ENCODE measurements at regions of chr7 and their contacts with region 1.

Region 1: DNA sequence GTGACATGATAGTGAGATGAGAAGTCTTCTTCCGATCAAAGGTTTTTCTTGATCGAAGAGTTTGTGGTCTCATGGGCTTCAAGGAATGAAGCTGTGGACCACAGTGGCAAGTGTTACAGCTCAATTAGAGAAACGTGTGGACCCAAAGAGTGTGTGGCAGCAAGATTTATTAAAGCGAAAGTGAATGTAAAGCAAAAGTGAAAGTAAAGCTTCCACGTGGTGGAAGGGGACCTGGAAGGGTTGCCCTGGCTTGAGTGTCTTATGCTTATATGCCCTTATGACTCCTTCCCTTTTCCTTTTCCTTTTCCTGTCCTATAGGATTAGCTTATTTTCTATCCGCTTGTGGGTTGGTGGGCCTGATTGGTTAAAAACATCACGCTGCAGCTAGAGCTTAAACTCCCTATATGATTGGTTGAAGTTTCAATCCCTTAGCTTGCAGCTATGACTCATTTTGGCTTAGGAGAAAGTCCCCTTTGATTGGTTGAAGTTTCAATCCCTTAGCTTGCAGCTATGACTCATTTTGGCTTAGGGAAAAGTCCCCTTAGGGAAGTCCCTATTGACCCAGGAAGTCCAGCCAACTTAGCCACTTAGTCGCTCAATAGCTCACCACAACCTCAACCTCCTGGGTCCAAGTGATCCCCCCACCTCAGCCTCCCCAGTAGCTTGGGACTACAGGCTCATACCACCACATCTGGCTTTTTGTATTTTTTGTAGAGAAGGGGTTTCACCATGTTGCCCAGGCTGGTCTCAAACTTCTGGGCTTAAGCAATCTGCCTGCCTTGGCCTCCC is 34.7 kb downstream of the MRPS24 start:
- DNase-seq: peak; percentile 29 to 80
- ATAC-seq: peak; percentile 67 to 75 (median 70)
- H3K4me3 ChIP-seq: peak overlapping the region; percentile 56
- H3K4me3 Mint-ChIP-seq: peak overlapping the region; percentile 84
- H3K27ac ChIP-seq: peak overlapping the region; percentile 81
- H3K27ac Mint-ChIP-seq: peak overlapping the region; percentile 83 to 91
- H3K4me1 ChIP-seq: peaks cover 18% of the 10 kb centered on the region
- H3K4me1 Mint-ChIP-seq: peaks cover 16 to 19% of the 10 kb centered on the region in 2 donors
- H3K27me3 ChIP-seq: no peaks in the 10 kb centered on the region
- H3K27me3 Mint-ChIP-seq: no peaks in the 10 kb centered on the region
- CTCF ChIP-seq: no peak

Region 2: GRCh38 chr7:42869131-42870020 is 965.3 kb before region 1 on chr7:
- intact Hi-C with region 1: no loop called
- DNase-seq: no peak
- ATAC-seq: peak in 1 of 3 donors; percentile 12
- H3K4me3 ChIP-seq: no peak overlapping the region
- H3K4me3 Mint-ChIP-seq: no peak overlapping the region
- H3K27ac ChIP-seq: no peak overlapping the region
- H3K27ac Mint-ChIP-seq: no peak overlapping the region
- H3K4me1 ChIP-seq: no peaks in the 10 kb centered on the region
- H3K4me1 Mint-ChIP-seq: peaks cover 0 to 15% of the 10 kb centered on the region in 2 donors
- H3K27me3 ChIP-seq: no peaks in the 10 kb centered on the region
- H3K27me3 Mint-ChIP-seq: peaks cover 0 to 6% of the 10 kb centered on the region in 2 donors
- CTCF ChIP-seq: no peak

Region 3: GRCh38 chr7:42940985-42941847 is 893.4 kb before region 1 on chr7:
- intact Hi-C with region 1: loop called (anchors 2 kb)
- DNase-seq: peak; percentile 42 to 80
- ATAC-seq: peak; percentile 58 to 77 (median 74)
- H3K4me3 ChIP-seq: no peak overlapping the region
- H3K4me3 Mint-ChIP-seq: no peak overlapping the region
- H3K27ac ChIP-seq: no peak overlapping the region
- H3K27ac Mint-ChIP-seq: no peak overlapping the region
- H3K4me1 ChIP-seq: no peaks in the 10 kb centered on the region
- H3K4me1 Mint-ChIP-seq: no peaks in the 10 kb centered on the region
- H3K27me3 ChIP-seq: no peaks in the 10 kb centered on the region
- H3K27me3 Mint-ChIP-seq: no peaks in the 10 kb centered on the region
- CTCF ChIP-seq: peak; percentile 85

Region 4: DNA sequence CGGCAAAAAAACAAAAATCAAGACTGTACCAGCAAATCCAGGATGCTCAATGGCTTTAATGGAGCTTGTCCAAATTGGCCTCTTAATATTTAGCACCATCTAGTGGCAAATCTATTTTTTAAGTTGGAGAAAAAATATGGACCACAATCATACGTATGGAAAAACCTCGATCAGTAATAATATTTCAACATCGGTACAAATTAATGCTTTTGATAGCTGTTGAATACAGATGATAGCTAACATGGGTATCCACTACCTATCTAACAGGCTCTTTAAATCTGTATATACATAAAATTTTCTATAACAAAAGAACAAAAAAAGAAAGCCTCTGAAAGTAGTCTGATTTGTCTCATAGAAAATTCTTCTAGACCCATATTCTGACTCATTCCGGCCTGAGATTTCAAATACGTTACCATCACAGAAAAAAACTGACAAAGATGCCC is 134.6 kb before region 1 on chr7:
- intact Hi-C with region 1: loop called (anchors 1 kb)
- DNase-seq: peak in 1 of 2 donors; percentile 80
- ATAC-seq: peak; percentile 70 to 94 (median 84)
- H3K4me3 ChIP-seq: no peak overlapping the region
- H3K4me3 Mint-ChIP-seq: peak overlapping the region; percentile 32
- H3K27ac ChIP-seq: no peak overlapping the region
- H3K27ac Mint-ChIP-seq: peak overlapping the region; percentile 54 to 63
- H3K4me1 ChIP-seq: no peaks in the 10 kb centered on the region
- H3K4me1 Mint-ChIP-seq: peaks cover 29 to 31% of the 10 kb centered on the region in 2 donors
- H3K27me3 ChIP-seq: no peaks in the 10 kb centered on the region
- H3K27me3 Mint-ChIP-seq: no peaks in the 10 kb centered on the region
- CTCF ChIP-seq: peak; percentile 79

Region 5: GRCh38 chr7:43729214-43729923 is 105.3 kb before region 1 on chr7 and contains the start of gene COA1:
- intact Hi-C with region 1: loop called (anchors 2 kb)
- DNase-seq: peak; percentile 74 to 93
- ATAC-seq: peak; percentile 92 to 96 (median 96)
- H3K4me3 ChIP-seq: peak within 1 kb of the TSS; percentile 84
- H3K4me3 Mint-ChIP-seq: peak within 1 kb of the TSS; percentile 94
- H3K27ac ChIP-seq: peak within 1 kb of the TSS; percentile 67
- H3K27ac Mint-ChIP-seq: peak within 1 kb of the TSS; percentile 89 to 90
- H3K4me1 ChIP-seq: peaks cover 6% of the 10 kb centered on the region
- H3K4me1 Mint-ChIP-seq: peaks cover 24 to 33% of the 10 kb centered on the region in 2 donors
- H3K27me3 ChIP-seq: no peaks in the 10 kb centered on the region
- H3K27me3 Mint-ChIP-seq: peaks cover 0 to under 1% of the 10 kb centered on the region in 2 donors
- CTCF ChIP-seq: peak; percentile 13
- total RNA-seq, gene COA1: 55.0 to 85.3 (median 69.5) TPM